AG04449 (cell line): ENCODE measurements at regions of chr5 and their contacts with region 1.

Region 1: GRCh38 chr5:174317259-174317894 is 271.9 kb downstream of the NSG2 start:
- DNase-seq: no peak
- H3K4me3 ChIP-seq: no peak overlapping the region
- CTCF ChIP-seq: peak; percentile 93

Region 2: DNA sequence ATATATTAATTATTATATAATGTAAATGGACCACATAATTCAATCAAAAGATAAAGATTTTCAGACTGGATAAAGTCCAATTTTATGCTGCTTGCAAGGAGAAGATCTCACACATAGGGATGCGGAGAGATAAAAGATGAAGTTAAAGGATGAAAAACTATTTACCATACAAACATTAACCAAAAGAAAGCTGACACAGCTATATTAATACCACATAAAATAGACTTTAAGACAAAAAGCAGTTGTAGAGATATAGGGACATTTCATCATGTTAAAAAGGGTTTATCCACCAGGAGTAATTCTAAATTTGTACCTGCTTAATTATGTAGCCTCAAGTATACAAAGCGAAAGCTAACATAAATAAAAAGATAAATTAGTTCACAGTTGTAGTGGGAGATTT is 287.1 kb before region 1 on chr5:
- CTCF ChIA-PET with region 1: interaction called, 13 read pairs
- POLR2A ChIA-PET with region 1: no interaction called
- DNase-seq: no peak
- H3K4me3 ChIP-seq: no peak overlapping the region
- CTCF ChIP-seq: no peak

Region 3: DNA sequence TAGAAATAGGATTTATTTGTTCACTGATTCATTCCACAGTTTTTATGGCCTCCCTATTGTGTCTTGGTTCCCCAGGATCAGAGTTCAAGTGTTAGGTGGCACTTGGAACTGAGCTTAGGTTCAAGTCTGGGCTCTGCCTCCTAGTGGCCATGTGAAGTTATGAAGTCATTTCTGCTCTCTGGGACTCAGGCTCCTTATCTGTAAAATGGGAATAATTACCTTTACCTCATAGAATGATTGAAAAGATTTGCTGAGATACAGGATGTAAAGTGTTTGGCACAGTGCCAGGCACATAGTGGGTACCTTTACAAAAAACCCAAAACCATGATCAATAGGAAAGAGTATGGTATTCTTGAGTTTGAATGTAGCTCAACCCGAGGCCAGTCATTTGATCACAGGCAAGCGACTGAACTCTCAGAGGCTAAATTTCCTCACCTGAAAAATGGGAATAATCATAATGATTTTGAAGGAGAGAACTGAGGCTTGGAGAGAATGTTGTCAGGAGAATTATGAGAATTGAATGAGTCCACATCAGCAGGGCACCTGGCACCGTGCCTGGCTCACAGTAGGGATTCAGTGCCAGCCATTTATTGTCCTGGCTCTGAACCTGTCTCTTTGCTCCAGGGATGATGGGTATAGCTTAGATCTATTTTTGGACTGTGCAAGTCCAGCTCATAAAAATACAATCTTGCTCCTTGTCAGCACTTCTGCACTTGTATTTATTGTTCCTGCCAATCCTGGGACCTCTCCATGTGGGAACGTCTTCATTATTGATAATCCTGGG is 261.1 kb before region 1 on chr5:
- CTCF ChIA-PET with region 1: interaction called, 509 read pairs
- POLR2A ChIA-PET with region 1: no interaction called
- DNase-seq: no peak
- H3K4me3 ChIP-seq: no peak overlapping the region
- CTCF ChIP-seq: no peak

Region 4: DNA sequence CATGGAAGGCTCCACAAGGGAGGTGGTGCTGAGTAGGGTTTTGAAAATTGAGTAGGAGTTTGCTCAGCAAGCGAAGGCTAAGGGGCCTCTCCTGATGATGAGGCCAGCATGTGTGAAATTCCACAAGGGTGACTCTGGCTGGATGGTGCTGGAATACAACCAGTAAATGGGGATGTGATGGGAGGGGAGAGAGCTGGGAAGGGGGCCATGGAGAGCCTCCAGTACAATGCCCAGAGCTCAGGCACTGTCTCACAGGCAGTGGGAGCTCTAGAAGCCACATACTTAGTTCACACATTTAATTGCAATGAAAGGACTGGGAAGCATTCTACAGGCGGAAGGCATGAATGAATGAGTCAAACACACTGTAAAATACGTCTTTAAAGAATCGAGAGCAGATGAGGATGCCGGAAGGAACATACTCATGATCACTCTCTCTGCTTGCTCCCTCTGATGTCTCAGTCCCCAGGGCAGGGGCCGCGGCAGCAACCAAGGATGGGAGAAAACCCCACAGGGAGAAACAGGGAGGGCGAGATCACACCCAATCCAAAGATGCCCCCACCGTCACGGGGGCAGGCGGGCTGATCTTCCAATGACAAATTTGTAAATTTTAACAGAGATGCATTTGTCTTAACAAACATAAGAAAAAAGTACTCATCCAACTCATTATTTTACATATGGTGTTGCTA is 10.9 kb before region 1 on chr5:
- CTCF ChIA-PET with region 1: interaction called, 177 read pairs
- POLR2A ChIA-PET with region 1: no interaction called
- DNase-seq: no peak
- H3K4me3 ChIP-seq: no peak overlapping the region
- CTCF ChIP-seq: no peak